ENCODE measurements at regions of chr2 and their contacts with region 1.

Region 1: DNA sequence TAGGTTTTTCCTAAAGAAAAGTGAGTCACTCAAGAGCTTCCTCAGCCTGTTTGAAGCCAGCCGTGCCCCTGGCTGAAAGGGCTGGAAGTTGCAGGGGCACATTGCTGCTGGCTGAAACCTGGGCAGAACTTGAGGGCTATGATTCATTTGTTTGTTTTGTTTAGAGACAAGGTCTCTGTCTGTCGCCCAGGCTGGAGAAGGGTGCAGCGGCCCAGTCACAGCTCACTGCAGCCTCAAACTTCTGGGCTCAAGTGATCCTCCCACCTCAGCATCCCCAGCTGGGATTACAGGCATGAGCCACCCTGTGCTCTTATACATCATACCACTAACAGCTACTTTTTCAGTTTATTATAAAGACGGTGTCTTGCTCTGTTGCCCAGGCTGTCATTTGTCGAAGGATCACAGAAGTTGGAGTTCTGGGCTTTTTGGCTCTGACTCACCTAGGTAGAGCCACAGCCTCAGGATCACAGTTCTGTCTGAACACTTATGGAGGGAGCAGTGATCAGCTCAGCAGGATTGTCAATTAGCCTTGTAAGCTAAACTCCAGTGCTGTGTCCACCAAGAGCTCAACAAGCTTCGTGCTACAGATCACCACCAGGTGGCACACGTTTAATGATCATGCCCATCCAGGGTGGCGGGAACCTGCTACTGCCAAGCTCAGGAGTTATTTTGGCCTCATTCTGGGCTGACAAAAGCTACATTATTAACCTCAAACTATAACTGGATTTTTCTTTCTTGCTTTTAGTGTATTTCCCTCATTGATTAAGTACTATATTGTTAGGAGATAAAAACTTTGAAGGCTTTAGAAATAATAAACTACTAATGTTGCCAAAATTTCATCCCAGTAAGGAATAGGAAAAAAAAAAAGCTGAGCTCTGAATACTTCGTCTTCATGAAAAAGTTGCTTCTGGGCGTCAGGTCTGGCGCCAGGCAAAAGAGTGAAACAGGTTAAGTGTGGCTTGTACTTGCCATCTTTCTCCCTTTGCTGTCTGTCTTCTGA is 57.9 kb downstream of the ARHGEF33 start:
- DNase-seq: peak in 33 of 35 experiments; percentile 15 to 74 (median 45)
- ATAC-seq: peak; percentile 45 to 75 (median 58)
- H3K4me3 ChIP-seq: no peak overlapping the region
- H3K4me3 Mint-ChIP-seq: no peak overlapping the region
- H3K27ac ChIP-seq: no peak overlapping the region
- H3K27ac Mint-ChIP-seq: no peak overlapping the region
- H3K4me1 ChIP-seq: no peaks in the 10 kb centered on the region
- H3K4me1 Mint-ChIP-seq: no peaks in the 10 kb centered on the region
- H3K27me3 ChIP-seq: peaks cover 0 to 3% of the 10 kb centered on the region in 2 experiments
- H3K27me3 Mint-ChIP-seq: no peaks in the 10 kb centered on the region

Region 2: GRCh38 chr2:38863378-38863695 is 84.2 kb before region 1 on chr2:
- CTCF ChIA-PET with region 1: no interaction called
- POLR2A ChIA-PET with region 1: no interaction called
- DNase-seq: no peak
- ATAC-seq: no peak
- H3K4me3 ChIP-seq: no peak overlapping the region
- H3K4me3 Mint-ChIP-seq: no peak overlapping the region
- H3K27ac ChIP-seq: no peak overlapping the region
- H3K27ac Mint-ChIP-seq: no peak overlapping the region
- H3K4me1 ChIP-seq: no peaks in the 10 kb centered on the region
- H3K4me1 Mint-ChIP-seq: peaks cover 0 to 8% (median 7%) of the 10 kb centered on the region in 3 donors
- H3K27me3 ChIP-seq: no peaks in the 10 kb centered on the region
- H3K27me3 Mint-ChIP-seq: no peaks in the 10 kb centered on the region

Region 3: DNA sequence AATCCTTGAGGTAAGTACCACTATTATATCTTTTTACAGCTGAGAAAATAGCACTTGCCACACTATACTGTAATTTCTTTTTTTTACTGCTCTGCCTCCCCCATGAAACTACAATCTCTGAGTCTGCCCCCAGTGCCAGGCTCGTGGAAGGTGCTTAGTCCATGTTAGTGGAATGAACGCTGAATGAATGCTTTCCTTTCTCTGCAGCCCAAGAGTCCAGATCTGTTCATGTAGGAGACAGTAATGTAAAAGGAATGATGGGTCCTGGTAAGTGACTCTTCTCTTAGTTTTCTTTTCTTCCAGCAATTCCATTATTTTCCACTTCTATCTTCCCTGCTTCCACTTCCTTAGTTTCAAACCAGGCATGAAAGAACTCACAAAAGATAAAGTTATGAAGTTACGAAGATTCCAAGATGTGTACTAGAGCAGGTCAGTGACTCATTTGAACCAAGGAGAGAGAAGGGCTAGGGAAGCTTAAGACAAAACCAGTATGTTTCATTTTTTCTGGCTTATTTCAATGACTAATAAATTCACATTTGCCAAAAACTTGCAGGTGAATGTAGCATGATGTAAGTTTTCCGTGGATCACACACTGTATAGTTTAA is 11.9 kb before region 1 on chr2:
- CTCF ChIA-PET with region 1: interaction called, 3 to 16 read pairs
- POLR2A ChIA-PET with region 1: no interaction called
- DNase-seq: no peak
- ATAC-seq: no peak
- H3K4me3 ChIP-seq: no peak overlapping the region
- H3K4me3 Mint-ChIP-seq: no peak overlapping the region
- H3K27ac ChIP-seq: no peak overlapping the region
- H3K27ac Mint-ChIP-seq: no peak overlapping the region
- H3K4me1 ChIP-seq: no peaks in the 10 kb centered on the region
- H3K4me1 Mint-ChIP-seq: no peaks in the 10 kb centered on the region
- H3K27me3 ChIP-seq: no peaks in the 10 kb centered on the region
- H3K27me3 Mint-ChIP-seq: peaks cover 6 to 7% of the 10 kb centered on the region in 2 donors

Region 4: GRCh38 chr2:39059366-39059952 is 111.9 kb after region 1 on chr2:
- CTCF ChIA-PET with region 1: interaction called in 1 of 2 experiments, 13 read pairs
- POLR2A ChIA-PET with region 1: no interaction called
- DNase-seq: peak in 1 of 35 experiments; percentile 75
- ATAC-seq: no peak
- H3K4me3 ChIP-seq: no peak overlapping the region
- H3K4me3 Mint-ChIP-seq: no peak overlapping the region
- H3K27ac ChIP-seq: no peak overlapping the region
- H3K27ac Mint-ChIP-seq: no peak overlapping the region
- H3K4me1 ChIP-seq: no peaks in the 10 kb centered on the region
- H3K4me1 Mint-ChIP-seq: peaks cover 6 to 16% (median 8%) of the 10 kb centered on the region in 3 donors
- H3K27me3 ChIP-seq: no peaks in the 10 kb centered on the region
- H3K27me3 Mint-ChIP-seq: no peaks in the 10 kb centered on the region

Measured in T-cell (primary cell).